Activated CD4-positive, alpha-beta memory T cell treated with anti-CD3 and anti-CD28 coated beads for 36 hours (primary cell): ENCODE measurements at regions of chr13 and their contacts with region 1.

Region 1: GRCh38 chr13:21670883-21671619 is at the start of gene FGF9:
- DNase-seq: peak; percentile 86
- H3K4me3 Mint-ChIP-seq: peak within 1 kb of the TSS; percentile 85
- H3K27ac Mint-ChIP-seq: peak within 1 kb of the TSS; percentile 40
- H3K4me1 Mint-ChIP-seq: peaks cover 42% of the 10 kb centered on the region
- H3K27me3 Mint-ChIP-seq: peaks cover 28% of the 10 kb centered on the region
- total RNA-seq, gene FGF9: 0.07 TPM in 1 of 2 experiments, not detected in the other

Region 2: GRCh38 chr13:20525690-20526544 is 1145.1 kb before region 1 on chr13 and contains the start of gene CRYL1:
- CTCF ChIA-PET with region 1: no interaction called
- POLR2A ChIA-PET with region 1: no interaction called
- intact Hi-C with region 1: loop called (anchors 5 kb)
- DNase-seq: peak; percentile 77
- H3K4me3 Mint-ChIP-seq: peak within 1 kb of the TSS; percentile 84
- H3K27ac Mint-ChIP-seq: peak within 1 kb of the TSS; percentile 86
- H3K4me1 Mint-ChIP-seq: peaks cover 33% of the 10 kb centered on the region
- H3K27me3 Mint-ChIP-seq: peaks cover 5% of the 10 kb centered on the region
- total RNA-seq, gene CRYL1: 17.5 to 18.2 TPM

Region 3: DNA sequence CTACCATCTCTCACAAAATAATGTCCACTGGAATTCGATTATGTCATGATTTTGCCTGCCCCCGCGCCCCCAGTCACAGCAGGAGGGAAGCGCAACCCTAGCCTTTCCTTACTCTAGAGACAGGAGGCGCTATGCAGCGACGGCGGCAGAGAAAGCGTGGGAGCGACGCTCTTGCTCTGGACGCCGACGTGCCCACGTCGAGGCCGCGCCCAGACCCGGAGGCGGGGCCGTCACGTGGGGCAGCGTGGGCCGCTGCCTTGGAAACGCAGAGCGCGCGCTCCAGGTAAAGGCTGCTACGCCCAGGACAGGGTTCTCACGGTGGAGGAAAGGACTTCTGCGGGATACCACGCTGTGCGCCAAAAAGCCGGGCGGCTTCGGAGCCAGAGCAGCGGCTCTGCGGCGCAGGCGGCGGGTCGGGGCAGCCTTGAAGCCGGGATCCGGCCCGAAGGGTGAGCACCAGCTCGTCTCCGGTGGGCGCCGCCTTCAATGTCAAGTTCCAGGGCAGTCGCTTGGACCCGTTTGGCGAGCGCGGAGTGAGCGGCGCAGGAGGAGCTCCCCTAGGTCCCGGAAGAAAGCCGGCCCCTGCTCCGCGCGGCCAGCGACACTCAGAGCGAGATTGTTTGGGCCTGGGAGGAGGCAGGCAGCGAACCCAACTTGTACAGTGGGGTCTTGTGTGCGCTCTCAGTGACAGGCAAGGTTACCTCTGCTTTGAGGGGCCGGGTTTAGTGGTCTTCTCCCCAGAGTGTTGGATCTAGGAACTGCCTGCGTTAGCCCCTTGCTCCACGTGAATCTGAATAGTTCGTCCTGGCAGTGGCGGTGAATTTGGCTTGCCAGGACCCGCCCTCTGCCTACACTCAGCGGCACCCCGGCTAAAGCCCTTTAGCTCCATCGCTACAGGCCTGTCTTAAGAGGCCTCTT is 372.9 kb before region 1 on chr13:
- CTCF ChIA-PET with region 1: no interaction called
- POLR2A ChIA-PET with region 1: no interaction called
- intact Hi-C with region 1: loop called (anchors 2 kb)
- DNase-seq: peak; percentile 91
- H3K4me3 Mint-ChIP-seq: peak overlapping the region; percentile 87
- H3K27ac Mint-ChIP-seq: peak overlapping the region; percentile 59
- H3K4me1 Mint-ChIP-seq: peaks cover 25% of the 10 kb centered on the region
- H3K27me3 Mint-ChIP-seq: no peaks in the 10 kb centered on the region

Region 4: DNA sequence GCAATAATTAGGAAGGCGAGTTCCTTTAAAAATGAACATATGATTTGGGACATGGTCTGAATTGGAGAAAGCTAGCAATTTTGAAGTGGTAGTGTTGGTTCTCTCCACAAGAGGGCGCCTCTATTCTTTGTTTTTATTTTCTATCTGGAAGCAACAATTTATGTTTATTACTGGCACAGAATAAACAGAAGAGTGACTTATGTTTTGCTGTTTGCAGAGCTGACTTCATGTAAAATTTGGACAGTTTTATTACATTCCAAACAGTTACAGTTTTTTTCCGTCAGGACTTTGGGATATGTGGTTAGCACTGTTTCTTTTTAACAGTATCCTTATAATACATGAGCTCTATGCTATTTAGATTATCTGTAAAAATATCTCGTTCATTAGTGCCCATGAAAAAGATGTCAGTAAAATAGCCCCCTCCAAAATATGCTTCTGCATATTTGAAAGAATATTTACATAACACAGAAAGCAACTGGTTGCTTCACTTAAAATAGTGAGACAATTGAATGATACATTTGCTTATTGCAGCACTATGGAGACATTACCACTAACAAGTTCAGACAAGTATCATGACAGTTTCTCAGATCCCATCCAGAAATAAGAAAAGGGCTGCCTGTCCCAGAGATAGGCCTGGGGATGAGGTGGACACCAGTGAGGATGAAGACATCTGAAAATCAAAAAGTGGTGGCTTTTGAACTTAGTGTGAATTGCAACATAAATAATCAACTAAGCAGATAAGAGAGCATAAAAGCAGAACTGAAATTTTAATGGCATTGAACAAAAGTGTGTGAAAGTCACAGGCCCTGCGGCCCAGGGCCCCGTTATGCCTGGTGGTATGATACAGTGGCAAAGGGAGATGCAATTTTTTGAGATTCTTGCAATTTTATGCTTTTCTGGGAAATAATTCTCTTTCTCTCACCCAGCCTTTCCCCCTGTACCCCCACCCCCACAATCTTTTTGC is 32.5 kb before region 1 on chr13:
- CTCF ChIA-PET with region 1: interaction called, 23 read pairs
- POLR2A ChIA-PET with region 1: no interaction called
- intact Hi-C with region 1: loop called (anchors 2 kb)
- DNase-seq: peak; percentile 15
- H3K4me3 Mint-ChIP-seq: no peak overlapping the region
- H3K27ac Mint-ChIP-seq: no peak overlapping the region
- H3K4me1 Mint-ChIP-seq: peaks cover 2% of the 10 kb centered on the region
- H3K27me3 Mint-ChIP-seq: peaks cover 3% of the 10 kb centered on the region

Region 5: DNA sequence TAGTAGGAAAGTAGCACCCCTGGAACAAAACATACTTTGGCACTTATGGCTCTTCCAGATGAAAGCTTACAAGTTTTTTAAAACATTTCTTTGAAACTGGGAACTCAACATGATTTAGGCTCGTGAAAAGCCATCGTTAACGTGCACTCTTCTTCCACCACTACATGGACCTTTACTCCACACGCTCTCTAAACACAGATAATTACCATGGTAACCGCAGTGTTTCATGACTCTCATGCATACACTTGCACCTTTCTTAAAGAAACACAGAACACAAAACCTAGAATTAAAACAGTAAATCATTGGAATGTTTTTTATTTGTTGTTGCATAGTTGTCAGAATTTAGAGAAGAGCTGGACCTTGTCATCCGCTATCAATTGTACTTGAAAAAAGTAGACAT is 154.1 kb after region 1 on chr13:
- CTCF ChIA-PET with region 1: no interaction called
- POLR2A ChIA-PET with region 1: no interaction called
- intact Hi-C with region 1: no loop called
- DNase-seq: no peak
- H3K4me3 Mint-ChIP-seq: no peak overlapping the region
- H3K27ac Mint-ChIP-seq: no peak overlapping the region
- H3K4me1 Mint-ChIP-seq: no peaks in the 10 kb centered on the region
- H3K27me3 Mint-ChIP-seq: peaks cover 1% of the 10 kb centered on the region

Region 6: DNA sequence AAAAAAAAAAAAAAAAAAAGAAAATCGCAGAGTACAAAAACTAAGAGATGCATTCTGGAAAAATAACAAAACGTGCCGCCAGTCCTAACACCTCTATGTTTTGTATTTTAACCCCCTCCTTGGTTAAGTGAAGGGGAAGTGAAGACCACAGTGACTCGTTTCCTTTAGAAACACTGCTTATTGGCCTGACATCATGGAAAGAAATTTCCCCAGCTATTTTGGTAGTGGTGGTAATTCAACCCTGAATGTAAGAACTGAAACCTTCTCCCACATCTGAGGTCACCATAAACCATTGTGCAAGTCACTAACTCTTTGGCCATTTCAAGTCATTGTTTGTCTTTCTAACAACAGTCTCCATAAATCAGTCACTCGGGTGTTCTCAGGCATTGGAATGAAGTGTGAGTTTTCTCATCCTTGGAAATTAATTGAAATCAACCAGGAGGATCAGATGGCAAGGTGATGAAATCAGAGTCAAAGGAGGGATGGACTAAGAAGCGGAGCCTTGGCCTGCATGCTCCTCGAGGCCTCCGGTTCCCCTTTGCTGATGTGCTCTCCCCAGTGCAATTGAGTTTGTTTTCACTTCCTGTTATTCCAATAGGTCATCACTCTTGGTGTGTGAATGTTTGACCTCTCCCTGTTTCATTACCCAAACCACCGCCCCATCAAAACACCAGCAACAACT is 443.7 kb after region 1 on chr13:
- CTCF ChIA-PET with region 1: no interaction called
- POLR2A ChIA-PET with region 1: no interaction called
- intact Hi-C with region 1: loop called (anchors 2 kb)
- DNase-seq: peak; percentile 18
- H3K4me3 Mint-ChIP-seq: peak overlapping the region; percentile 3
- H3K27ac Mint-ChIP-seq: peak overlapping the region; percentile 79
- H3K4me1 Mint-ChIP-seq: peaks cover 51% of the 10 kb centered on the region
- H3K27me3 Mint-ChIP-seq: no peaks in the 10 kb centered on the region